ENCODE measurements at regions of chr5 and their contacts with region 1.

Region 1: GRCh38 chr5:81194633-81195333 is 38.3 kb upstream of the CKMT2 start:
- DNase-seq: peak; percentile 85
- H3K4me3 Mint-ChIP-seq: no peak overlapping the region
- H3K27ac Mint-ChIP-seq: no peak overlapping the region
- H3K4me1 Mint-ChIP-seq: peaks cover 9% of the 10 kb centered on the region
- H3K27me3 Mint-ChIP-seq: no peaks in the 10 kb centered on the region

Region 2: DNA sequence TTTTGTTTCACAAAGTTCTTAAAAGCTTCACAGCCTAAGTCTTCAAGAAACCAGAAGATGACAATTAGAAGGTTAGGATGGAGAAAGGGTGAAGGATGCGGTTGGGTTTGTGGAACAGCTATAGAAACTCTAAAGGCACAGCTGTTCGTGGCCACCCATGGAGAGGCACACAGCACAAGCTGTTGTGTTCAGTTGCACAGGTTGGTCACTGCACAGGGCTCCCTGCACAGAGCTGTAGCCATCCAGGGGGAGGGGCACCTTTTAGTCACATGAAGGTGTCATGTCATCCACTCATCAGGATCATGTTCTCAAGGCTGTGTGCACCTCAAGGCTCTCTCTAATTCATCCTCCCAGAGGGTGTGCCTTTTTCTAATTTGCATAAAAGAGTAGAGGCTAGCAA is 239.7 kb before region 1 on chr5:
- CTCF ChIA-PET with region 1: no interaction called
- POLR2A ChIA-PET with region 1: no interaction called
- DNase-seq: no peak
- H3K4me3 Mint-ChIP-seq: no peak overlapping the region
- H3K27ac Mint-ChIP-seq: no peak overlapping the region
- H3K4me1 Mint-ChIP-seq: peaks cover 18% of the 10 kb centered on the region
- H3K27me3 Mint-ChIP-seq: peaks cover 10% of the 10 kb centered on the region

Region 3: DNA sequence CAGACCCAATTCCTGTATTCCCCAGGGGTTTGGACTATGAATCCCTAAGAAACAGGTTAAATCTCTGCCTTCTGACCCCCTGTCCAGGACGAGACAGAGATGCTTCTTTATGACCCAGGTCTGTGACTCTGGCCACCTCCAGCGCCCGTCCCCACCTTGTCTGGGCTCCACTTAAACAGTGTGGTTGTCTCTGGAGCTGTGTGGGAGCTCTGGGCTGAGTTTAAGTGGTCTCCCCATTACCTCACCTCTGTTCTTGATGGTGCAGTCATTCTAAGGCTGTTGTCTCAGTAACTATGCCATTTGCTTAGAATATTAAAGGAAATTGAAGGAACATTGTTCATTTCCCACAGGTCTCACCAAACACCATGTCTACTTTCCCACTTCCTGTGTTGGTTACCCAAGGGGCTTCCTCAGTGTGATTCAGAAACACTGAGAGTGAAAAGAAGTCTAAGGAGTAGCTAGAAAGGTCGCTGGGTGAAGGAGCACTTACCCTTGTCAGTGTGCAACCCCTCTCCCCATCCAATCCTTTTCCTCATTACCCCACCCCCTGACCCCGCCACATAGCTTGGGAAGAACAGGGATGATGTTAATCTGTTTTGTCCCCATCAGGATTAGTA is 89.4 kb before region 1 on chr5:
- CTCF ChIA-PET with region 1: interaction called, 10 read pairs
- POLR2A ChIA-PET with region 1: no interaction called
- DNase-seq: no peak
- H3K4me3 Mint-ChIP-seq: no peak overlapping the region
- H3K27ac Mint-ChIP-seq: no peak overlapping the region
- H3K4me1 Mint-ChIP-seq: peaks cover 15% of the 10 kb centered on the region
- H3K27me3 Mint-ChIP-seq: no peaks in the 10 kb centered on the region

Region 4: DNA sequence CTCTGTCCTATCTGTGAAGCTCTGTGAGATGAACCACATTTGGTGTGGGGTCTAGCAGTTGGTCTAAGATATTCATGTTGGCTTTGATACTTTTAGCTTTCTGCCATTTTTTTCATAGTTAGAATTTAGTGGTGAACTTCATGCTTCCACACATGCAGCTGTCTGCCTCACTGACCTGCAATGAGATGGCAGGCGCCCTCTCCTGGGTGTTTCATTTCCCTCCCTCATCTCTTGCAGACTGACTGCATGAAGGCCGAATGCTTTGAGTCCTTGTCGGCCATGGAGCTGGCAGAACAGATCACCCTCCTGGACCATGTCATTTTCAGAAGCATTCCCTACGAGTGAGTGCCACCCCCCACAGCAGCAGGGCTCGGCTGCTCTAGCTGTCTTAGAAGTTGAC is 12.2 kb after region 1 on chr5:
- CTCF ChIA-PET with region 1: interaction called, 22 read pairs
- POLR2A ChIA-PET with region 1: interaction called, 3 read pairs
- DNase-seq: no peak
- H3K4me3 Mint-ChIP-seq: no peak overlapping the region
- H3K27ac Mint-ChIP-seq: no peak overlapping the region
- H3K4me1 Mint-ChIP-seq: peaks cover under 1% of the 10 kb centered on the region
- H3K27me3 Mint-ChIP-seq: no peaks in the 10 kb centered on the region

Region 5: DNA sequence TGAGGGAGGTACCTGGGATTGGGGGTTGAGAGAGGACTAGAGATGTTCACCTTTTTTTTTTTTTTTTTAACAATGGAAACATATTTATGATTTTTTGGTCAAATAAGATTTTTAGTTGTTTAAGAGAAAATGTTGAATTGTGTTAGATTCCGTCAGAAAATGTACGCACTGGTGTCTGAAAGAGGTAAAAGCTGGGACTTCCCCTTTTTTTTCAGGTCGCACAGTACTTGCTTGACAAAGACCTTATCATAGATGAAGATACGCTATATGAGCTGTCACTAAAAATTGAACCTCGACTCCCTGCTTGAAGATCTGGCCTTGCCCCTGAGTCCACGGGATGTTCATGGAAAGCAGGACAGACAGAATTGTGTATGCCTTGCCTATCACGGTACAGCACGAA is 30.7 kb after region 1 on chr5:
- CTCF ChIA-PET with region 1: no interaction called
- POLR2A ChIA-PET with region 1: no interaction called
- DNase-seq: no peak
- H3K4me3 Mint-ChIP-seq: no peak overlapping the region
- H3K27ac Mint-ChIP-seq: no peak overlapping the region
- H3K4me1 Mint-ChIP-seq: no peaks in the 10 kb centered on the region
- H3K27me3 Mint-ChIP-seq: no peaks in the 10 kb centered on the region

Region 6: GRCh38 chr5:81239613-81240012 is 44.8 kb after region 1 on chr5:
- CTCF ChIA-PET with region 1: no interaction called
- POLR2A ChIA-PET with region 1: no interaction called
- DNase-seq: no peak
- H3K4me3 Mint-ChIP-seq: no peak overlapping the region
- H3K27ac Mint-ChIP-seq: no peak overlapping the region
- H3K4me1 Mint-ChIP-seq: peaks cover 8% of the 10 kb centered on the region
- H3K27me3 Mint-ChIP-seq: no peaks in the 10 kb centered on the region